BJ (cell line): ENCODE measurements at regions of chr1 and their contacts with region 1.

Region 1: GRCh38 chr1:157992031-157992832 is 1.2 kb upstream of the KIRREL1 start:
- DNase-seq: no peak
- H3K4me3 ChIP-seq: no peak overlapping the region
- H3K27me3 ChIP-seq: 0 out of 2 replicates have a peak, but pooled peaks cover 1% of the 10 kb centered on the region
- CTCF ChIP-seq: peak; percentile 99

Region 2: GRCh38 chr1:157963713-157964112 is 28.5 kb before region 1 on chr1:
- CTCF ChIA-PET with region 1: interaction called, 96 read pairs
- POLR2A ChIA-PET with region 1: no interaction called
- DNase-seq: no peak
- H3K4me3 ChIP-seq: no peak overlapping the region
- H3K27me3 ChIP-seq: peaks cover 6% of the 10 kb centered on the region
- CTCF ChIP-seq: peak; percentile 88

Region 3: DNA sequence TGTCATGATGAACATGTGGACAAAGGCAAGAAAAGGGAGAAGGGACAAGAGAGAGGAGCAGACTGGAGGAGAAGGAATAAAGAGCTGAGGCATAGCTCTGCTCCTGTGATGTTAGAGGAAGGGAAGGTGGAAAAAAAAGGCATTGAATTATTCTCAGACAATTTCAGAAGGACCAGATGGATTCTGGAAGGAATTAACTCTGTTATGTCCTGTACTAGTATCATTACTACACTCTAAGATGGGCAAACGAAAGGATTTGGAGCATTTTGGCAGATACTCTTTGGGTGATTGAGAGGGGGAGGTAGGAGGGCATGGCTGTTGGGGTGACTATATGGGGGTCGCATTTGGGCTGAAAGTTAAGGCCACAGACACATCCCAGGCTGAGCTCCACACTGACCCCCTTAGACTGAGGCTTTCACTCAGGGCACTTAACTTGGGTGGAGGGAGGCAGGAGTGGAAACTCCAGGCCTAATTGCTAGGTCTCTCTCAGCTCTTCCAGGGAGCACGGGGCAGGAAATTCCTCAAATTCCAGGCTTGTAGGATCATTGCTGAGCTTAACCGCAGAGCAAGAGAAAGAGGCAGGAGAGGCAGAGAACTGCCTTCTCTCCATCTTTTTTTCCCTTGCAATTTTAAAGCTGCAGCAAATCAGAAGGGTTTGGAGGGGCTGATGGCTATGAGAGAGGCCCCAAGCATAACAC is 27.1 kb after region 1 on chr1:
- CTCF ChIA-PET with region 1: interaction called, 51 read pairs
- POLR2A ChIA-PET with region 1: interaction called, 4 read pairs
- DNase-seq: peak; percentile 86
- H3K4me3 ChIP-seq: 0 out of 2 replicates have a peak overlapping the region, but pooled peaks have one; percentile 1
- H3K27me3 ChIP-seq: no peaks in the 10 kb centered on the region
- CTCF ChIP-seq: no peak

Region 4: GRCh38 chr1:158075078-158075477 is 82.8 kb after region 1 on chr1:
- CTCF ChIA-PET with region 1: interaction called, 35 read pairs
- POLR2A ChIA-PET with region 1: interaction called, 4 read pairs
- DNase-seq: no peak
- H3K4me3 ChIP-seq: no peak overlapping the region
- H3K27me3 ChIP-seq: no peaks in the 10 kb centered on the region
- CTCF ChIP-seq: no peak

Region 5: GRCh38 chr1:158101927-158102326 is 109.7 kb after region 1 on chr1:
- CTCF ChIA-PET with region 1: interaction called, 98 read pairs
- POLR2A ChIA-PET with region 1: interaction called, 4 read pairs
- DNase-seq: peak; percentile 21
- H3K4me3 ChIP-seq: no peak overlapping the region
- H3K27me3 ChIP-seq: peaks cover 1% of the 10 kb centered on the region; the same call in 1 of the 2 replicates
- CTCF ChIP-seq: no peak

Region 6: DNA sequence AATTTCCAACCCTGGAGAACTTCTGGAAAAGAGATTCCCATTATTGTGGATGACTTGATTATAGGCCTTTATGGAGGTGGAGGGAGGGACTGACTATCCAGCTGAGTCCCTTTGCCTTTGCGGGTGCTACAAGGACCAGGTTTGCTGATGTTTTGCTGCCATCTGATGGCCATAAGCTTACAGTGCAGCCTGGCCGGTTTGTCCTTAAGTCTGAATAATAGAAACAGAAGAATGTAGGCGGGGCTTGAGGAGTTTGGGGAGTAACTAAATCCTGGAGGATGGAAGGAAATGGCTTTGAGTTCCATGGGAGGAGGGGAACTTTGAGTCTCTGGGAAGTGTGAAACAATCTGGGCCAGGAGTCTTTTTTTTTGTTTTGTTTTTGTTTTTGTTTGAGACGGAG is 132.8 kb after region 1 on chr1:
- CTCF ChIA-PET with region 1: interaction called, 187 read pairs
- POLR2A ChIA-PET with region 1: no interaction called
- DNase-seq: peak; percentile 73
- H3K4me3 ChIP-seq: no peak overlapping the region
- H3K27me3 ChIP-seq: peaks cover 7% of the 10 kb centered on the region
- CTCF ChIP-seq: peak; percentile 90

Region 7: DNA sequence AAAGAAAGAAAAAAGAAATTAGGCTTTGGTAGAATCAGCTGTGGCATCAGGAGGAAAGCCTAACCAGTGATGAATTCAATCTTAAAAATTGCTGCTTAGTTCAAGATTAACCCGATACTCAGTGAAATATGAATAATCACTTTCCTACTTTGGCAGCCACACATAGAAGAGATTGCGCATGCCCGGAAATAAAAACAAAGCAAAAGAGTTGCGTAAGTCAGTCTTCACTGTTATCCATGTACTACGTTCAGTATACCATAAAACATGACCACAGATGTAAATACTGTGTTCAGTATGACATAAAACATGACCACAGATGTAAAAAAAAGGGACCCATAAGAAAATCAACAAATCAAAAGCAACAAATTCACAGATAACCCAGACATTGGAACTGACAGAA is 207.6 kb after region 1 on chr1:
- CTCF ChIA-PET with region 1: no interaction called
- POLR2A ChIA-PET with region 1: no interaction called
- DNase-seq: no peak
- H3K4me3 ChIP-seq: no peak overlapping the region
- H3K27me3 ChIP-seq: no peaks in the 10 kb centered on the region
- CTCF ChIP-seq: no peak